Heart left ventricle (tissue), 16 donors: ENCODE measurements at regions of chr13 and their contacts with region 1.

Region 1: DNA sequence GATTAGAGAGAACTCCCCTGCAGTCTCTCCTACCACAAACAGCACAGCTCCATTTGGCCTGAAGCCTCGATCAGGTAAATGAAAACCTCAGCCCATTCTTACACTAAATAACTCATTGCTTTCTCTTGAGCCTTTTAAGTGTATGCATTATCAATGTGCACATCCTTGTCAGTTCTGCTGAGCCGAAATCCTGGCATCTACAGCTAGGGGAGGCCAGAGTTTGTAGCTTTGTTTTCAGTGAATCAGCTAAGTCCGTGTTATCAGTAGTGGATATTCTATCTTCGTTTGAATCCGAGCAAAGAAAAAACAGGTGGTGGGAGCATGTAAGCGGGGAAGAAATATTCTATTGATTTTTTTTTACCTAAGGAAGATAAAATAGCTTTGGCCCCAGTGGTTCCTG is 84.4 kb downstream of the ESD start:
- DNase-seq: no peak
- ATAC-seq: no peak
- H3K4me3 ChIP-seq: no peak overlapping the region
- H3K27ac ChIP-seq: no peak overlapping the region
- H3K4me1 ChIP-seq: peaks cover 0 to 5% (median 0%) of the 10 kb centered on the region in 12 donors
- H3K27me3 ChIP-seq: no peaks in the 10 kb centered on the region
- CTCF ChIP-seq: no peak
- POLR2A ChIP-seq: no peak

Region 2: DNA sequence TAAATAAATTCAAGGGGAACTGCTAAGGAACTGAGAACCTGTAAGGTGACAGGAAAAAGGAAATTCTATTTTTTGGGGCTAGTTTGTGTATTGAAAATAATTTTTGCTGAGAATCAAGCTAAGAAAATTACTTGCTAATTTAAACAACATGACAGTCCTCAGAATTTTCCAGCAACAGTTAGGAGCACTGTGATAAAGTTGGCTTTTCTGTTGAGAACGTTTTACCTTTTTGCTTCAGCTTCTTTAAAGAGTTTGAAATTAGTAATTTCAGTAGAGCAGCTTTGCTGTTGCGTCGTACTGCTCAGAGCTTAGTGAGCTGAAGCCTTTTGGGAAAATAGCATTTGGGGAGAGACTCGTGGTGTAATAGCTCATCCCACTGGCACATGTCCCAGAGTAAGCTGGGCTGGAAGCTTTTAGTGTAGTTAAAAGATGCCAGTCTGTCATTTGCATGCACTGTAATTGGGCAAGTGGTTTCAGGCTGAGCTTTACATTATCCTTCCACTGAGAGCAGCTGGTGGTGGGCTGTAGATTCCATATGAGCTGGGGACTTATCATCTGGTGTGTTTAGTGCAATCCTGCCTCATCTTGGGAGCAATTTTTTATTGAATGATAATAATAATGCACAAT is 89.8 kb before region 1 on chr13:
- intact Hi-C with region 1: loop called in 1 of 10 experiments (anchors 5 kb)
- DNase-seq: peak in 4 of 5 donors; percentile 43 to 66 (median 56)
- ATAC-seq: peak; percentile 53 to 84 (median 78)
- H3K4me3 ChIP-seq: no peak overlapping the region
- H3K27ac ChIP-seq: peak overlapping the region in 2 of 12 donors; percentile 16 to 66
- H3K4me1 ChIP-seq: peaks cover 3 to 70% (median 50%) of the 10 kb centered on the region in 12 donors
- H3K27me3 ChIP-seq: no peaks in the 10 kb centered on the region
- CTCF ChIP-seq: no peak
- POLR2A ChIP-seq: no peak